Endothelial cell of umbilical vein (primary cell): ENCODE measurements at regions of chr3 and their contacts with region 1.

Region 1: DNA sequence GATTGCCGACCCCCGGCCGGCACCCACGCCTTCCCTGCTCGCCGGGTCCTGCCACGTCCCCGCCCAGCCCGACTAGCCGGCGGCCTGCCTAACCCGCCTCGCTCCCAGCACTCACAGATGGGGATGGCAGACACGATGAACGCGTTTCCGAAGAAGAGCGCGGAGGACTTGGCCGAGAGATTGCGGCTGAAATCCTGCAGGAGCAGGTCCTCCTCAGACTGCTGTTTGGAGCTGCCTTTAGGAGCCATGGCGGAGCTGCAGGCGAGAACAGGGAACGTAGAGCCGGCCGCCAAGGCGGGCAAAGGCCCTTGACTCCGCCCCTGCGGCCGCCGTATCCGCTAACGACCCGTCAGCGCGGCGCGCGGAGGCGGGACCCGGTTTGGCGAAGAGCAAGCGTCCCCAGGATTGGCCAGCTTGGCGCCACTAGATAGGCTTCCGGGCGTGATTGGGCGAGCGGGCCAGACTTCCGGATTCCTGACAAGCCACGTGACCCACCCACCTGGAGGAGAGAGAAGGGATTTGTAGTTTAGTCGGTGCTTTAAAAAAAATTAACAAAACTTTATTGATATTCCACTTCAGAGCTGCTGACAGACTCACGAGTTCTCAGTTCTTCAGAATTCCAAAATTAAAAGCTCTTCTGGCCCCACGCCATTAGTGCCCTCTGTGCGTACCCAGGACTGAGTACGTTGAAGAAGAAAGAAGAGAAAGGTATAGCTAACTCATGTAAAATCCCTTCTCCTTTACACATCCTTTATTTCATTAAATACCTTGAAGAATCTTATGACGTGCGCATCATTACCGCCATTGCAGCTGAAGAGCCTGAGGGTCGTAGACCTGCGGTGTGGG is at the start of gene SSR3:
- DNase-seq: peak; percentile 99
- H3K4me3 ChIP-seq: peak within 1 kb of the TSS; percentile 79 to 97 (median 94)
- H3K27ac ChIP-seq: peak within 1 kb of the TSS; percentile 87
- H3K4me1 ChIP-seq: peaks cover 42% of the 10 kb centered on the region
- H3K27me3 ChIP-seq: no peaks in the 10 kb centered on the region
- CTCF ChIP-seq: no peak
- POLR2A ChIP-seq: peak; percentile 93
- total RNA-seq, gene SSR3: 355 and 370 TPM in 2 replicates

Region 2: DNA sequence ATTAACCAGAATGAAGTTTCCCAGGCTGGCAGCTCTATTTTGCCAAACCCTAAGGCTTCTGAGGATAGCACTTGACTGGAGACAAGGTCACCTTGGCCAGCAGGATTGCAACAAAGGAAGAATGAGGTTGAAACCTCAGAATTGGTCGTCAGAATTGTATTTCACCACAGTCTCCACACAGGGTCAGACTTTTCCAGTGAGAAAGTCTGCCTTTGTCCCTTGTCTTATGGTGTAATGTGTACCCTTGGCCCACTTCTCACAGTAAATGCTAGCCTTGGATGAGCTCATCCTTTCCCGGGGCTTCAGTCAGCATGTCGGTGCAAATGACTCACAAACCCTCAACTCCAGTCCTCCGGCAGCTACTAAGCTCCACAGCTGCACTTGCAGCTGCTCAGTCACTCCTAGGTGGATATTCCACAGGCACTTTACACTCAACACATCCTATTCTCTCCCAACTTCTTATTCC is 19.9 kb before region 1 on chr3:
- CTCF ChIA-PET with region 1: interaction called, 15 read pairs
- POLR2A ChIA-PET with region 1: interaction called, 11 read pairs
- dilution Hi-C with region 1: no loop called
- intact Hi-C with region 1: no loop called
- DNase-seq: peak; percentile 94
- H3K4me3 ChIP-seq: no peak overlapping the region
- H3K27ac ChIP-seq: peak overlapping the region; percentile 55
- H3K4me1 ChIP-seq: peaks cover 7% of the 10 kb centered on the region
- H3K27me3 ChIP-seq: no peaks in the 10 kb centered on the region
- CTCF ChIP-seq: peak in 1 of 2 donors; percentile 22
- POLR2A ChIP-seq: peak; percentile 58

Region 3: DNA sequence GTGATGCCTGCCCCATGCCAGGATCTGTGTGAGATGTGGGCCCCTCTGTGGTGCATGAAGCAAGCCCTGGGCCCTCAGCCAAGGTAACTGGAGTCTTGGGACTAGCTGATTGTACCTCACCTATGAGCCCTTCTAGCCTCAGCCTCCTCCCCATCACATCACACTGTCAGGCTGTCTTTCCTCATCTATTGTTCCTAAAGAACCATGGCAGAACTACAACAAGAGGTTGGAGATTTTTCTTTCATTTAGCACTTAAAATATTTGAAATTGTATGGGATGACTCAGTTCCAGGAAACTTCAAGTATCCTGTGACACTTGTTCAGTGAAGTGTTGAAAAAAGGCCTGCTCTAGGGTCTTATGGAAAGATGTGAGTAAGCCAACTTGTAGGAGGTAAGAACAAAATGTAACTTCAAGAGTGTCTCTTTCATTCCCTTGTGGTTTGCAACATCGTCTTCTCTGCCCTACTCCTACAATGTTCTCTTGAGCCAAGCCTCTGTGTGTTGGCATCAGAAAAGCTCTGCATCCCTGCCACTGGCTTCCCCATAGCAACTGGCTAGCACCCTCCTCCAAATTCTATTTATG is 60.6 kb after region 1 on chr3:
- CTCF ChIA-PET with region 1: no interaction called
- POLR2A ChIA-PET with region 1: no interaction called
- dilution Hi-C with region 1: no loop called
- intact Hi-C with region 1: loop called (anchors 5 kb)
- DNase-seq: peak; percentile 67
- H3K4me3 ChIP-seq: no peak overlapping the region
- H3K27ac ChIP-seq: no peak overlapping the region
- H3K4me1 ChIP-seq: peaks cover 11% of the 10 kb centered on the region
- H3K27me3 ChIP-seq: no peaks in the 10 kb centered on the region
- CTCF ChIP-seq: no peak
- POLR2A ChIP-seq: no peak

Region 4: DNA sequence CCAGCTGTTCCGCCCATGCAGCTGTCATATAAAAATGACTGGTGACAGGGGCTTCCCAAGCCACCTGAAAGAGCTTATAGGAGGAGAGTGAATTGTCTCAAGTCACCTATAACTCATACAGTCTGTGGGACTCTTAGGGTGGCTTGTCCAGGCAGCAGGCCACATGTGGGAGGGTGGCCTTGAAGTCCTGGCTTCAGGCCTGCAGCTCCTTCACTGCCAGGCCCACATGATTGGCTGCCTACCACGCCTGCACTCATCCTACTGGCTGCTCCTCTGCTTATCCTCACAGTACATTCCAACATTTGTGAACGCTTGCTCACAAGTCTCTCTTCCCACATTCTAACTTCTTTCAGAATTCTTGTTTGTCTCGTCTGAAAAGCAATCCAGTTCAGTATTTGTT is 78.3 kb after region 1 on chr3:
- CTCF ChIA-PET with region 1: no interaction called
- POLR2A ChIA-PET with region 1: no interaction called
- dilution Hi-C with region 1: no loop called
- intact Hi-C with region 1: no loop called
- DNase-seq: no peak
- H3K4me3 ChIP-seq: no peak overlapping the region
- H3K27ac ChIP-seq: no peak overlapping the region
- H3K4me1 ChIP-seq: no peaks in the 10 kb centered on the region
- H3K27me3 ChIP-seq: no peaks in the 10 kb centered on the region
- CTCF ChIP-seq: no peak
- POLR2A ChIP-seq: no peak

Region 5: GRCh38 chr3:156727519-156728205 is 172.6 kb after region 1 on chr3:
- CTCF ChIA-PET with region 1: no interaction called
- POLR2A ChIA-PET with region 1: no interaction called
- dilution Hi-C with region 1: no loop called
- intact Hi-C with region 1: no loop called
- DNase-seq: no peak
- H3K4me3 ChIP-seq: no peak overlapping the region
- H3K27ac ChIP-seq: no peak overlapping the region
- H3K4me1 ChIP-seq: no peaks in the 10 kb centered on the region
- H3K27me3 ChIP-seq: no peaks in the 10 kb centered on the region
- CTCF ChIP-seq: no peak
- POLR2A ChIP-seq: no peak

Region 6: DNA sequence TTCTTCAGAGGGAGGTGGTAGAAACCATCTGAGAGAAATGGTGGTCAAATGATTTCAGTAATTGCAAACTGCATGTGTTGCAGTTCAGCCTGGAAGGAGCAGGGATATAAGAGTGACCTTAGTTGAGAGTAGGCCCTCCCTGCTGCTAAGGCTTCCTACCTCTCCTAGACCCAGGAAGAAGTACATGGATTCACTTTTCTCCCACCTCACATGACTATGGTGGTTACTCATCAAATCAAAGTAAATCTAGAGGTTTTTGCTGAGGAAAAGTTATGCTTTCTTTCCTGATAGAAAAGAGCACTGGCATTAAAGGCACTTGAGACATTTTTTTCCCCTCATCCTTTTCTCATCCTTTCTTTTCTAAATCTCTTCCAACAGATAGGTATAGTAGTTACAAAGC is 227.9 kb after region 1 on chr3:
- CTCF ChIA-PET with region 1: no interaction called
- POLR2A ChIA-PET with region 1: no interaction called
- dilution Hi-C with region 1: no loop called
- intact Hi-C with region 1: loop called (anchors 1 kb)
- DNase-seq: peak; percentile 10
- H3K4me3 ChIP-seq: no peak overlapping the region
- H3K27ac ChIP-seq: peak overlapping the region; percentile 98
- H3K4me1 ChIP-seq: peaks cover 37% of the 10 kb centered on the region
- H3K27me3 ChIP-seq: no peaks in the 10 kb centered on the region
- CTCF ChIP-seq: no peak
- POLR2A ChIP-seq: no peak

Region 7: GRCh38 chr3:156816800-156817645 is 262.0 kb after region 1 on chr3:
- CTCF ChIA-PET with region 1: no interaction called
- POLR2A ChIA-PET with region 1: interaction called, 3 read pairs
- dilution Hi-C with region 1: no loop called
- intact Hi-C with region 1: loop called (anchors 2 kb)
- DNase-seq: peak; percentile 86
- H3K4me3 ChIP-seq: peak overlapping the region in 2 of 3 experiments; percentile 37
- H3K27ac ChIP-seq: peak overlapping the region; percentile 91
- H3K4me1 ChIP-seq: peaks cover 56% of the 10 kb centered on the region
- H3K27me3 ChIP-seq: no peaks in the 10 kb centered on the region
- CTCF ChIP-seq: no peak
- POLR2A ChIP-seq: no peak

Region 8: DNA sequence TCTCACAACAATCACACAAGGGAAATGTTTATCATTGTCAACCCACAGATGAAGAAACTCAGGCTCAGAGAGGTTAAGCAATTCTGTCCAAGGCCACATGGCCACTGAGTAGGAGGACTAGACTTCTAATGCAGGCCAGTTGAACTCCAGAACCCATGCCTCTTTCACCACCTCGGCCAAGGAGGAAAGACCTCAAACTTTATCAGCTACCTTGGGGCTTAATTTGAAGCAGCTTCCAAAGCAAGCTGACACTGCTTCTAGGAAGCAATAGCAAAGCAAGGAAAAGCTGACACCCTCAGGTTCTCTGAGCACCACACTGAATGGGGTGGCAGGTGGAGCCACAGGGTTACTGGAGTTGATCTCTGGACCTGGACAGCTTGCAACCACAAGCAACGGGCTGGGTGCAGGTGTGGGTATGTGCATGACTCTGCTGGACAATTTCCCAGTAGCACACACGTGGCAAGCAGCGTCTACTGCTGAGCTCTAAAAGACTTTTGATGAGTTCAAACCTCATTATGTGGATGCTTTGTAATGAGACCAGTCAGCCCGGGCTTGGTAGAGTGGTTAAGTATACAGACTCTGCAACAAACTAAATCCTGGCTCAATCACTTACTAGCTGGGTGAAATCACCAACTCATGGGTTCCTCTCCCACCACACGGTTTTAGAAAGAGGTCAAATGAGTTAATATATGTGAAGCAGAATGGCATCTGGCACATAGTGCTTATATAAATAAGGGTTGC is 581.8 kb after region 1 on chr3:
- CTCF ChIA-PET with region 1: interaction called, 10 read pairs
- POLR2A ChIA-PET with region 1: no interaction called
- dilution Hi-C with region 1: no loop called
- intact Hi-C with region 1: no loop called
- DNase-seq: no peak
- H3K4me3 ChIP-seq: no peak overlapping the region
- H3K27ac ChIP-seq: no peak overlapping the region
- H3K4me1 ChIP-seq: peaks cover 6% of the 10 kb centered on the region
- H3K27me3 ChIP-seq: no peaks in the 10 kb centered on the region
- CTCF ChIP-seq: no peak
- POLR2A ChIP-seq: no peak

Region 9: DNA sequence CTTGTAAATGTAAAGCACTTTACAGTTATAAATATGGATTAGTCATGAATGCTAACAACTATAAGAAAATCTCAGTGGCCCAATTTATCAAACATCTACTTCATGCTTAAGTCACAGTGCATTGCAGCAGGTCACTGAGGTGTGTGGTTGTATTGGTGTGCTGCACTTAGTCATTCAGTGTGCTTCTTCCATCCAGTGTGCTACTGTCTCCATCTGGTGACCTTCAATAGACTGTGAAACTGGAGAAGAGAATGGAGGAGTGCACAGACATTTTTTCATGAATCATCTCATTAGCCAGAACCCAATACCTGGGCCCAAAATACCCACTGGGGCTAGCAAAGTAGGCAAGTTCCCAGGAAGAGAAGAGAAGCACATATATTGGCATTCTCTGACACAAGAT is 1351.6 kb after region 1 on chr3:
- CTCF ChIA-PET with region 1: no interaction called
- POLR2A ChIA-PET with region 1: no interaction called
- dilution Hi-C with region 1: no loop called
- intact Hi-C with region 1: no loop called
- DNase-seq: no peak
- H3K4me3 ChIP-seq: no peak overlapping the region
- H3K27ac ChIP-seq: no peak overlapping the region
- H3K4me1 ChIP-seq: no peaks in the 10 kb centered on the region
- H3K27me3 ChIP-seq: no peaks in the 10 kb centered on the region
- CTCF ChIP-seq: no peak
- POLR2A ChIP-seq: no peak